Left colon (tissue), 2 donors: ENCODE measurements at regions of chr10 and their contacts with region 1.

Region 1: DNA sequence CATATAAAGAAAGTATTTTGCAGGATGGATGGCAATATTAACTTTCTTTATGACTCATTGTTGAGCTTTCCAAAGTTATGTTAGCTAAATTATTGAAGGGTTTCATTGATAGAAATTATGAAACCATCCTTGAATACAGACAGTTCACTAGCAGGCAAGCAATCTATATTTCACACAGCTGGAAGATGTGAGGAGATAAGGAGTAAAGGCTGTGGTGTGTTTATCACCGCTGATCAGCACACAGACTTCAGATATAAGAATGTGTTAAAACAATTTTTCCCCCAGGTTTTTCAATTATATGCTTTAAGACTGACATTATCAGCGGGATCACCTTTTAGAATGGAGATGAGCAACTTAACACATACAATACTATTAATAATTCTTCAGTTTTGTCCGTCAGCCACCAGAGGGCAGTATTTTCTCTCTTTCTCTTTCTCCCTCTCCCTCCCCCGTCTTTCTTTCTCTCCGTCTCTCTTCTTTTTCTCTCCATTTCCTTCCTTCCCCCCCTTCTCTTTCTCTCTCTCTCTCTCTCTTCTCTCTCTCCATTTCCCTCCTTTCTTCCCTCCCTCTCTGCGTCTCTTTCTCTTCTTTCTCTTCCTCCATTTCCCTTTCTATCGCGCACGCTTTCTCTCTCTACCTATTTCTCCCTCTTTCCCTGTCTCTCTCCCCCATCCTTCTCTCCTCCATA is 62.9 kb upstream of the FAM171A1 start:
- DNase-seq: no peak
- ATAC-seq: peak; percentile 64

Region 2: DNA sequence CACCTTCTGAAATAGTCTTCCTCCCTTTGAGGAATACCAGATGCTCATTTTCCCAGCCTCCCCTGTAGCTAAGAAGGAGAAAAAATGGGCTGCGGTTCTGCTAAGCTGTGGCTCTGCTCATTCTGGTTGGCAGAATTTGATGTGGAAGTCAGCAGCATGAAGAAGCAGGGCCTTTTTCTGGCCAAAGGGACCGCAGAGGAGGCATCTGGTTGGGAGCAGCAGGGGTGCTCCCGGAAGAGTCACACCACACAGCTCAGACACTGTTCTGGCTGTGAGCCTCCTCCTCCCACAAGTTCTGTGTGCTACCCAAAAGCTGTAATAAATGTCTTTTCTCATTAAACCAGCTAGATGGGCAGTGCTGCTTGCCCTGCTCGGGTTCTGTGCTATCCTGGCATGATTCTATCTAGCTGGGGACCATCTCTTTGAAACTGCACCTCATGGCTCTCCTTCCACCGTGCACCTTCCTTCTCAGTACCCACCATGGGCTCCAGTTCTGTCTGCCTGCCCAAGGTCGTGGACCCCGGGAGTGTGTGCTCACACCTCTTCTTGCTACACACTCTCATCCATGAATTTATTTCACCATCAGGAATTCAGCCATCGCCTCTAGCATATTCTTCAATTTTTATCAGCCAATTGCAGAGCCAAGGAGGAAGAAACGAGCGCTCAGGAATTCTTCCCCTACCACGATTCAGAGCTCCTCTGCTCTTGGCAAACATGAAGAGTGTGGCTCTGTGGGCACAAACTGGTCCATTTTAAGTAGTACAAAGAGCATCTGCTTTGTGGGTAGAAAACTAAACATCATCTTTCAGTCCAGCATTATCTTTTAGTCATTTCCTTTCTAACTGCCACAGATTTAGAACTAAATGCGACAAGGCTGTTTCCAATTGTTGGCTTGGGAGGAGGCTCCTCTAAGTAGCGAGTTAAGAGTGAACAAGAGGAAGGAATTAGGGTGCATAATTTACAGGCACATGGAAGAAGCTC is 139.8 kb before region 1 on chr10:
- intact Hi-C with region 1: no loop called
- DNase-seq: no peak
- ATAC-seq: no peak

Region 3: GRCh38 chr10:15642095-15642494 is 208.1 kb after region 1 on chr10:
- intact Hi-C with region 1: no loop called
- DNase-seq: no peak
- ATAC-seq: no peak

Region 4: GRCh38 chr10:15719899-15720634 is 286.1 kb after region 1 on chr10 and contains the start of gene ITGA8:
- intact Hi-C with region 1: loop called in 1 of 2 experiments (anchors 5 kb)
- DNase-seq: peak in 1 of 2 donors; percentile 31
- ATAC-seq: peak; percentile 36
- total RNA-seq, gene ITGA8: 2.6 to 6.1 TPM